Activated CD4-positive, alpha-beta memory T cell treated with anti-CD3 and anti-CD28 coated beads for 36 hours (primary cell): ENCODE measurements at regions of chr17 and their contacts with region 1.

Region 1: GRCh38 chr17:55421179-55421934 is at the start of gene MMD:
- DNase-seq: no peak
- H3K4me3 Mint-ChIP-seq: peak within 1 kb of the TSS; percentile 89
- H3K27ac Mint-ChIP-seq: peak within 1 kb of the TSS; percentile 93
- H3K4me1 Mint-ChIP-seq: peaks cover 42% of the 10 kb centered on the region
- H3K27me3 Mint-ChIP-seq: peaks cover 19% of the 10 kb centered on the region
- total RNA-seq, gene MMD: 22.1 to 24.2 TPM

Region 2: DNA sequence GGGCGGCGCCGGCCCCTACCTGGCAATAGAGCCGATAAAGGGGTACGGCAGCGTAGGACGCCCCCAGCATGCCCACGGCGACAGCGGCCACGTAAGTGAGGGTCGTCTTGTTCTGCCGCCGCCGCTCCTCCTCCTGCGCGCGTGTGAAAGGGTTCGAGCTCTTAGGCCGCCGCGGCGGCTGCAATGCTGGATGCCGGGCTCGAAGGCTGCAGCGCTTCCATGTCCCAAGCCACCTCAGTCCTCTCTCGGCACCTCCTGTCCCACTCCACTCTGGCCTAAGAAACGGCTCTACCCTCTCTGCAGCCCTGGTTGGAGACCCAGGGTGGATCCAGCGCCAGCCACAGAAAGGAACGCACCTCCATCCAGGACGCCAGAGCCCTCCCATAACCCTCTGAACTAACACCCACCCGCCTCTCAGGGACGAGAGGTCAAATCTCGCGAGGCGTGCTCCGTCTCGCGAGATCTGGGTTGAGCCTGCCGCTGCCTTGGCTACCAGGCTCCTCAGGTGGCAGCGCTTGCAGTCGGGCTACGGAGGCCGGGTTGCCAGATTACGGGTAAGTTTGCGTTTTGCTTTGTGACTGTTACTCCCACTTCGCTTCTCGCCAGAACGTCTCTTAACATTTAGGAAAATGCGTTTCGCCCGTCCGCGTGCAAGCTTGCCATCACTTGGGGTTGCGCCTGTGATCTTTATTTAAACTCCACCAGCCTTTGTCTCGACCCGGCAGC is 452.9 kb before region 1 on chr17 and contains the starts of genes COX11 and STXBP4:
- CTCF ChIA-PET with region 1: no interaction called
- POLR2A ChIA-PET with region 1: no interaction called
- intact Hi-C with region 1: loop called (anchors 1 kb)
- DNase-seq: peak; percentile 97
- H3K4me3 Mint-ChIP-seq: no peak within 1 kb of the TSS
- H3K27ac Mint-ChIP-seq: no peak within 1 kb of the TSS
- H3K4me1 Mint-ChIP-seq: peaks cover 23% of the 10 kb centered on the region
- H3K27me3 Mint-ChIP-seq: no peaks in the 10 kb centered on the region
- total RNA-seq, gene COX11: 44.2 to 49.9 TPM
- total RNA-seq, gene STXBP4: 3.2 to 4.3 TPM

Region 3: GRCh38 chr17:55341432-55341831 is 79.9 kb before region 1 on chr17:
- CTCF ChIA-PET with region 1: no interaction called
- POLR2A ChIA-PET with region 1: no interaction called
- intact Hi-C with region 1: loop called (anchors 5 kb)
- DNase-seq: peak; percentile 30
- H3K4me3 Mint-ChIP-seq: no peak overlapping the region
- H3K27ac Mint-ChIP-seq: no peak overlapping the region
- H3K4me1 Mint-ChIP-seq: peaks cover 46% of the 10 kb centered on the region
- H3K27me3 Mint-ChIP-seq: peaks cover 25% of the 10 kb centered on the region

Region 4: GRCh38 chr17:55458977-55459376 is 37.6 kb after region 1 on chr17:
- CTCF ChIA-PET with region 1: no interaction called
- POLR2A ChIA-PET with region 1: no interaction called
- intact Hi-C with region 1: loop called (anchors 1 kb)
- DNase-seq: peak; percentile 81
- H3K4me3 Mint-ChIP-seq: no peak overlapping the region
- H3K27ac Mint-ChIP-seq: no peak overlapping the region
- H3K4me1 Mint-ChIP-seq: peaks cover 19% of the 10 kb centered on the region
- H3K27me3 Mint-ChIP-seq: peaks cover 17% of the 10 kb centered on the region

Region 5: GRCh38 chr17:55478986-55479385 is 57.6 kb after region 1 on chr17:
- CTCF ChIA-PET with region 1: no interaction called
- POLR2A ChIA-PET with region 1: no interaction called
- intact Hi-C with region 1: no loop called
- DNase-seq: no peak
- H3K4me3 Mint-ChIP-seq: no peak overlapping the region
- H3K27ac Mint-ChIP-seq: no peak overlapping the region
- H3K4me1 Mint-ChIP-seq: no peaks in the 10 kb centered on the region
- H3K27me3 Mint-ChIP-seq: peaks cover 10% of the 10 kb centered on the region

Region 6: GRCh38 chr17:55750750-55751657 is 329.6 kb after region 1 on chr17 and contains the start of gene PCTP:
- CTCF ChIA-PET with region 1: no interaction called
- POLR2A ChIA-PET with region 1: no interaction called
- intact Hi-C with region 1: loop called (anchors 5 kb)
- DNase-seq: peak; percentile 93
- H3K4me3 Mint-ChIP-seq: peak within 1 kb of the TSS; percentile 75
- H3K27ac Mint-ChIP-seq: no peak within 1 kb of the TSS
- H3K4me1 Mint-ChIP-seq: peaks cover 14% of the 10 kb centered on the region
- H3K27me3 Mint-ChIP-seq: peaks cover 18% of the 10 kb centered on the region
- total RNA-seq, gene PCTP: 9.3 to 9.8 TPM

Region 7: GRCh38 chr17:55811536-55811935 is 390.2 kb after region 1 on chr17:
- CTCF ChIA-PET with region 1: no interaction called
- POLR2A ChIA-PET with region 1: no interaction called
- intact Hi-C with region 1: no loop called
- DNase-seq: no peak
- H3K4me3 Mint-ChIP-seq: no peak overlapping the region
- H3K27ac Mint-ChIP-seq: no peak overlapping the region
- H3K4me1 Mint-ChIP-seq: peaks cover 4% of the 10 kb centered on the region
- H3K27me3 Mint-ChIP-seq: peaks cover 5% of the 10 kb centered on the region